ENCODE measurements at regions of chr4 and their contacts with region 1.

Region 1: GRCh38 chr4:10535912-10536311 is 78.7 kb upstream of the ZNF518B start:
- DNase-seq: no peak
- H3K4me3 ChIP-seq: no peak overlapping the region
- H3K27ac ChIP-seq: no peak overlapping the region
- H3K4me1 ChIP-seq: peaks cover 0 to 3% (median 2%) of the 10 kb centered on the region in 4 experiments; a peak in 3 of 7 replicates
- H3K27me3 ChIP-seq: no peaks in the 10 kb centered on the region
- CTCF ChIP-seq: no peak
- EP300 ChIP-seq: no peak
- POLR2A ChIP-seq: no peak
- RAD21 ChIP-seq: no peak

Region 2: GRCh38 chr4:10157478-10158332 is 378.2 kb before region 1 on chr4:
- CTCF ChIA-PET with region 1: interaction called, 60 read pairs
- POLR2A ChIA-PET with region 1: no interaction called
- DNase-seq: peak; percentile 39 to 62
- H3K4me3 ChIP-seq: no peak overlapping the region
- H3K27ac ChIP-seq: no peak overlapping the region
- H3K4me1 ChIP-seq: peaks cover 0 to 5% (median 0%) of the 10 kb centered on the region in 4 experiments; a peak in 1 of 7 replicates
- H3K27me3 ChIP-seq: no peaks in the 10 kb centered on the region; a peak in 4 of 7 replicates
- CTCF ChIP-seq: peak; percentile 52 to 86 (median 73)
- EP300 ChIP-seq: no peak
- POLR2A ChIP-seq: no peak
- RAD21 ChIP-seq: peak; percentile 86 to 88

Region 3: GRCh38 chr4:10173037-10173753 is 362.7 kb before region 1 on chr4:
- CTCF ChIA-PET with region 1: interaction called, 60 read pairs
- POLR2A ChIA-PET with region 1: no interaction called
- DNase-seq: no peak
- H3K4me3 ChIP-seq: no peak overlapping the region
- H3K27ac ChIP-seq: no peak overlapping the region
- H3K4me1 ChIP-seq: no peaks in the 10 kb centered on the region; a peak in 2 of 7 replicates
- H3K27me3 ChIP-seq: no peaks in the 10 kb centered on the region
- CTCF ChIP-seq: peak in 1 of 3 experiments; percentile 16; a peak in 1 of 4 replicates
- EP300 ChIP-seq: no peak
- POLR2A ChIP-seq: no peak
- RAD21 ChIP-seq: 0 out of 4 replicates have a peak, but pooled peaks of 1 of the 2 experiments have one; percentile 9

Region 4: GRCh38 chr4:10273030-10273429 is 262.9 kb before region 1 on chr4:
- CTCF ChIA-PET with region 1: no interaction called
- POLR2A ChIA-PET with region 1: no interaction called
- DNase-seq: no peak
- H3K4me3 ChIP-seq: no peak overlapping the region
- H3K27ac ChIP-seq: no peak overlapping the region
- H3K4me1 ChIP-seq: no peaks in the 10 kb centered on the region
- H3K27me3 ChIP-seq: no peaks in the 10 kb centered on the region
- CTCF ChIP-seq: no peak
- EP300 ChIP-seq: no peak
- POLR2A ChIP-seq: no peak
- RAD21 ChIP-seq: no peak

Region 5: GRCh38 chr4:10461091-10461849 is 74.6 kb before region 1 on chr4:
- CTCF ChIA-PET with region 1: interaction called, 39 read pairs
- POLR2A ChIA-PET with region 1: no interaction called
- DNase-seq: peak in 1 of 2 experiments; percentile 86
- H3K4me3 ChIP-seq: peak overlapping the region; percentile 38 to 79 (median 67)
- H3K27ac ChIP-seq: no peak overlapping the region
- H3K4me1 ChIP-seq: peaks cover 0 to 21% (median 11%) of the 10 kb centered on the region in 4 experiments; a peak in 5 of 7 replicates
- H3K27me3 ChIP-seq: peaks cover 57 to 72% (median 66%) of the 10 kb centered on the region in 4 experiments
- CTCF ChIP-seq: peak; percentile 86 to 93 (median 91)
- EP300 ChIP-seq: no peak
- POLR2A ChIP-seq: no peak
- RAD21 ChIP-seq: peak; percentile 70 to 83

Region 6: GRCh38 chr4:10492464-10492863 is 43.4 kb before region 1 on chr4:
- CTCF ChIA-PET with region 1: interaction called, 14 read pairs
- POLR2A ChIA-PET with region 1: no interaction called
- DNase-seq: no peak
- H3K4me3 ChIP-seq: no peak overlapping the region
- H3K27ac ChIP-seq: no peak overlapping the region
- H3K4me1 ChIP-seq: peaks cover 4 to 14% (median 10%) of the 10 kb centered on the region in 4 experiments; a peak in 5 of 7 replicates
- H3K27me3 ChIP-seq: peaks cover 3 to 12% (median 7%) of the 10 kb centered on the region in 4 experiments; a peak in 5 of 7 replicates
- CTCF ChIP-seq: no peak
- EP300 ChIP-seq: no peak
- POLR2A ChIP-seq: no peak
- RAD21 ChIP-seq: no peak

Region 7: GRCh38 chr4:10577018-10577417 is 41.1 kb after region 1 on chr4:
- CTCF ChIA-PET with region 1: no interaction called
- POLR2A ChIA-PET with region 1: no interaction called
- DNase-seq: no peak
- H3K4me3 ChIP-seq: no peak overlapping the region
- H3K27ac ChIP-seq: no peak overlapping the region
- H3K4me1 ChIP-seq: peaks cover 2 to 8% (median 5%) of the 10 kb centered on the region in 4 experiments; a peak in 3 of 7 replicates
- H3K27me3 ChIP-seq: no peaks in the 10 kb centered on the region
- CTCF ChIP-seq: no peak
- EP300 ChIP-seq: no peak
- POLR2A ChIP-seq: no peak
- RAD21 ChIP-seq: no peak

Measured in H1 (cell line).